GM12878 (cell line): ENCODE measurements at regions of chr1 and their contacts with region 1.

Region 1: DNA sequence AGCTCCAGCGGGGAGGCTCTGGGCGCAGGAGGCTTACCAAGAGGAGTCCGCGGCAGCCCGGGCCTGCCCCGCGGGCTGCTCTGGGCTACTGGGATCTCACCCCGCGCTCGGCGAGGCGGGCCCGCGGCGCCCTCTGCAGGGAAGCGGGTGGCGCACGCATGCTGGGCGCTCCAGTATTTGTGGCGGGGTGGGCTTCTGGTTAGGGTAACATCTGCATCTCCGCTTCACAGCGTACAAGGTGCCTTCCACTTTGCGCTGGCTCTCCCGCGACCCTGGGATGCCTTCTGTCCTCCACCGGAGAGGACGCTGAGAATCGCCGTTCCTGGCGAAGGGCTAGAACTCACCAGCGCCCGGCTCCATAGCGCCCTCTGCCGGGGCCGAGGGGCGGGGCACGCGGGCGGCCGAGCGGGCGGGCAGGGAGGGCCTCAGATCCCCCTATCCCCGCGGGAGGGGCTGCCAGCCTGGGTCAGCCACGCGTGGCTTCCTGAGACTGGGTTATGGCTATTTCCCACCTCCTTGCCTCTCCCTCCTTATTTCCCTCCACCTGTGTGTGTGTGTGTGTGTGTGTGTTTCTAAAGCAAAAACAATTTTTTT is 46.6 kb upstream of the CTBS start:
- DNase-seq: peak; percentile 38
- ATAC-seq: peak; percentile 98
- H3K4me3 ChIP-seq: peak overlapping the region; percentile 78
- H3K27ac ChIP-seq: peak overlapping the region; percentile 47
- H3K4me1 ChIP-seq: no peaks in the 10 kb centered on the region
- H3K27me3 ChIP-seq: no peaks in the 10 kb centered on the region; a peak in 1 of 4 replicates
- CTCF ChIP-seq: peak; percentile 64 to 79 (median 73)
- EP300 ChIP-seq: no peak
- POLR2A ChIP-seq: peak; percentile 44
- RAD21 ChIP-seq: peak; percentile 85

Region 2: DNA sequence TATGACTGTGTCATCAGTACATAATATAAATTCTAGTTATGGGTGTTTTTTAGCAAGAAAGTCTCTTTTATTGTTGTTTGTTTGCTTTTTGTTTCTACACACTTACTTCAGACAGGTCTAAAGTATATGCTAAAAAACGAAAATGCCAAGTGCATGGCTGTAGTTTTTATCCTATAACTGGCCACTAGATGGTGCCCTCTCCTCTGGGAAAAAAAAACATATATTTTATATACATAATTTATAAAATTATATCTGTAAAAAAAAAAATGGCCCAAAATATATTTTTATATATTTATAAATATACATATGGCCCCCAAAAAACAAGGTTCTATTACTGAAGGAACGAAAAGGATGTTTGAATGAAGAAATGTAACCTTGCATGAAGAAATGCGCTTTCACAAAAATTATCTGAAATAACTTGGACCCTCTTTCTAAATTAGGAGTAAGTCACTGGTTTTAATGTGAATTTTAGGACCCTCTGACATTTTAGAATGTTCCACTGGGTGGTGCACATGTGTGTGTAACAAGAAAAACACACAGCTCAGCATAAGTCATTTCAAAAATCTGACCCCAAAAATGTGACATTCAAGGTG is 715.4 kb before region 1 on chr1:
- CTCF ChIA-PET with region 1: no interaction called
- POLR2A ChIA-PET with region 1: no interaction called
- RAD21 ChIA-PET with region 1: interaction called, 3 read pairs
- SMC1A ChIA-PET with region 1: no interaction called
- in situ Hi-C with region 1: no loop called
- intact Hi-C with region 1: loop called (anchors 10 kb)
- DNase-seq: no peak
- ATAC-seq: peak; percentile 35; the same call in 1 of the 3 replicates
- H3K4me3 ChIP-seq: no peak overlapping the region
- H3K27ac ChIP-seq: no peak overlapping the region
- H3K4me1 ChIP-seq: no peaks in the 10 kb centered on the region
- H3K27me3 ChIP-seq: no peaks in the 10 kb centered on the region
- CTCF ChIP-seq: peak; percentile 42 to 51 (median 46); a peak in 5 of 6 replicates
- EP300 ChIP-seq: no peak
- POLR2A ChIP-seq: no peak
- RAD21 ChIP-seq: peak; percentile 49

Region 3: DNA sequence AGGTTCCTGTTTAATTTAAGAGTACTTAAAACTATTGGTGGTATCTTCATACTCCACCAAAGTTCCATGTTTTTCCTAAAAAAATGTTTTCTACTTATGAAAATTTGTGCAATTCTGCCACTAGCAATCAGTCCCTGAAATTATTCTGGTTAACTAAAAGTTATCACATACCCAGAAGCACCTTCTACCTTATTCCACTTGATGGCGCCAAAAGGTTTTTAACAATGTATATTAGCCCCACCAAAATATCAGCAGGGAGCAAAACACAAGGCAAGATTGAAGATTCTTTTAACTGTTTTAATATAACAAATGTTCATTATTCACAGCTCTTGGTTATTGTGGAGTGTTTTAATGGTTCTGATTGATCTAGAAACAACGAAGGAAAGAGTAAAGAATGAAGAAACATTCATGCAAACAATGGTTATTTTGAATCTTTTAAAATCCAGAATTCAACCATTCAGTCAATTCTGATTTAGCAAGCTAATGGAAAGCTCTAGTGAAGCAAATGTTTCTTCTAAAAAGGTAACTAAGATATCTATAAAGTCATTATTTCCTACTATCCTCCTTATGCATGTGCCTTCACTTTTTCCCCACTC is 689.1 kb before region 1 on chr1:
- CTCF ChIA-PET with region 1: no interaction called
- POLR2A ChIA-PET with region 1: no interaction called
- RAD21 ChIA-PET with region 1: no interaction called
- SMC1A ChIA-PET with region 1: no interaction called
- in situ Hi-C with region 1: loop called (anchors 25 kb)
- intact Hi-C with region 1: loop called (anchors 10 kb)
- DNase-seq: no peak
- ATAC-seq: peak; percentile 84
- H3K4me3 ChIP-seq: no peak overlapping the region
- H3K27ac ChIP-seq: no peak overlapping the region
- H3K4me1 ChIP-seq: no peaks in the 10 kb centered on the region
- H3K27me3 ChIP-seq: no peaks in the 10 kb centered on the region; a peak in 1 of 4 replicates
- CTCF ChIP-seq: peak; percentile 44 to 70 (median 59); a peak in 5 of 6 replicates
- EP300 ChIP-seq: no peak
- POLR2A ChIP-seq: no peak
- RAD21 ChIP-seq: peak; percentile 92

Region 4: DNA sequence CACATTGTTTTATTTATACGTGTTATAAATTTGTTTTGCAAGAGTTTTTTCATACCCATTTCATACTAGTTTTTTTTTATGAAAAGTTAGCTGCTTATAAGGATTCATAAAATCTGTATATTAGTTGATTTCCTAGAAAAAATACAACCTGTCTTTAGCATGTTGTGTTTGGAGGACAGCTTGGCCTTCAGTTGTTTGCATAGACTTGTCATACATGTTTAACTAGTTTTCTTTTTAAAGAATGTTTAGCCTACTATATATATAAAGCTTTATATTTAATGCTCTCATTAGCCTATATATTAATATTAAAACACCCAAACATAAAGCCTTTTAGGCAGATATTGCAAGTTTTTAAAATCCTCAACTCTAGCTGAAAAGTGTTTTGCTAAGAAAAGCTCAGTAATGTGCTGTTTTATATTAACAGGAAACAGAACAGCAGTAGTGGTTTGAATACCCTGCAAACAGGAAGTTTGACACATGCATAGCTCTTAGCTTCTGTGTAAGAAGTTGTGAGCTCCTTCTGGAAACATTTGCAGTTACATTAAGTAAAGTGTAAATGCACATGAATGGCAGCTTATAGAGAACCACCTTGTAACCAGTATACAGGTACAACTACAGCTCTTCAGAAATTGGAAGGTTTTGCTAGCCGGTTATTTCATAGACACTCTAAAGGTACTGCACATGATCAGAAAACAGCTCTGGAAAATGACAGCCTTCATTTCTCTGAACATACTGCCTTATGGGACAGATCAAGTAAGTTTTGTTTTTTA is 476.8 kb before region 1 on chr1 and contains the start of gene PRKACB:
- CTCF ChIA-PET with region 1: no interaction called
- POLR2A ChIA-PET with region 1: no interaction called
- RAD21 ChIA-PET with region 1: interaction called, 3 read pairs
- SMC1A ChIA-PET with region 1: interaction called, 3 read pairs
- in situ Hi-C with region 1: loop called (anchors 10 kb)
- intact Hi-C with region 1: loop called (anchors 10 kb)
- DNase-seq: peak; percentile 24
- ATAC-seq: peak; percentile 50; the same call in 2 of the 3 replicates
- H3K4me3 ChIP-seq: no peak within 1 kb of the TSS
- H3K27ac ChIP-seq: no peak within 1 kb of the TSS
- H3K4me1 ChIP-seq: no peaks in the 10 kb centered on the region
- H3K27me3 ChIP-seq: no peaks in the 10 kb centered on the region
- CTCF ChIP-seq: no peak
- EP300 ChIP-seq: no peak
- POLR2A ChIP-seq: no peak
- RAD21 ChIP-seq: no peak
- polyA plus RNA-seq, gene PRKACB: 3.1 to 3.3 TPM

Region 5: GRCh38 chr1:84506002-84506728 is 114.7 kb before region 1 on chr1 and contains the starts of genes GNG5 and SPATA1:
- CTCF ChIA-PET with region 1: interaction called, 4 read pairs
- POLR2A ChIA-PET with region 1: interaction called, 3 read pairs
- RAD21 ChIA-PET with region 1: interaction called, 4 read pairs
- SMC1A ChIA-PET with region 1: interaction called, 7 read pairs
- in situ Hi-C with region 1: no loop called
- intact Hi-C with region 1: loop called (anchors 2 kb)
- DNase-seq: peak; percentile 85
- ATAC-seq: peak; percentile 89
- H3K4me3 ChIP-seq: peak within 1 kb of the TSS; percentile 85
- H3K27ac ChIP-seq: peak within 1 kb of the TSS; percentile 91
- H3K4me1 ChIP-seq: no peaks in the 10 kb centered on the region
- H3K27me3 ChIP-seq: no peaks in the 10 kb centered on the region
- CTCF ChIP-seq: no peak
- EP300 ChIP-seq: peak in 1 of 2 experiments; percentile 24; a peak in 1 of 4 replicates
- POLR2A ChIP-seq: peak; percentile 85
- RAD21 ChIP-seq: no peak
- polyA plus RNA-seq, gene GNG5: 296 to 323 TPM
- polyA plus RNA-seq, gene SPATA1: 0.74 to 1.5 TPM